ENCODE measurements at regions of chr21 and their contacts with region 1.

Region 1: DNA sequence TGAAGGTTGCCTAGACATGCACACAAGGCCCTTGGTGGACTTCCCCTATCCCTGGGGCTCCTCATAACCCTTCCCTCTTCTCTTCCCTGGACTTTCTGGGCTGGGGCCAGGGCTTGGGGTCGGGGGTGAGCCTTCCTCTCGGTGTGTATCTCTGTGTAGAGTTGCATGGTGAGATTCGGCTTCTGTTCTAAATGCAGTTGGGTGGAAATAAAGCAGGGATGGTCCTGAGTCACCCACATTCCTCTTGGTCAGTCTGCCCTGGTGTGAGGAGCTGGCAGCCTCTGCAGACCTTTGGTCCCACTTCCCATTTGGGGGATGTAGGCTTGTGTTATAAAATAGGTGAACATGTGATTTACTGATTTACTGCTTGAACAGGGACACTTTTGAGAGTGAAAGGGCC is 38.0 kb downstream of the ADARB1 start:
- DNase-seq: no peak
- H3K4me3 ChIP-seq: no peak overlapping the region
- H3K27ac ChIP-seq: peak overlapping the region; percentile 75 to 76
- H3K4me1 ChIP-seq: peaks cover 0 to 98% (median 56%) of the 10 kb centered on the region in 4 donors
- H3K27me3 ChIP-seq: no peaks in the 10 kb centered on the region
- CTCF ChIP-seq: no peak

Region 2: DNA sequence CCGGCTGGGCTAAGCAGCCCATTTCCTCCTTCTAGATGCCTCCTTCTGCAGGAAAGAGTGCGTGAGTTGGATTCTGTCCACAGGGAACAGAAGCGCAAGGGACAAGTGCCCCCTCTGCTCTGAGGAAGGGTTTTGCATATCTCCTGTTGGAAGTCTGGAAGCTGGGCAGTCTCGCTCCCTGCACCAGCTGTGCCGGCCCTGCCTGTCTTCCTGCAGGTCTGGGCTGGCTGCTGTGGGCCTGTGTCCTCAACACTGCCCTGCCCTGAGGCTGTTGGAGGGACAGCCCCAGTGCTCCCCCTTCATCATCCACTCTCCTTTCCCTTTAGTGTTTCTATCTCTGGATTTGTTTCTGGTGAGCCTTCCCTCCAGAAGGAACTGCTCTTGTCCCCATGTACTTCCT is 16.2 kb before region 1 on chr21:
- intact Hi-C with region 1: loop called (anchors 2 kb)
- DNase-seq: no peak
- H3K4me3 ChIP-seq: peak overlapping the region in 1 of 2 donors; percentile 4
- H3K27ac ChIP-seq: peak overlapping the region; percentile 63 to 66
- H3K4me1 ChIP-seq: peaks cover 0 to 100% (median 91%) of the 10 kb centered on the region in 4 donors
- H3K27me3 ChIP-seq: no peaks in the 10 kb centered on the region
- CTCF ChIP-seq: no peak

Measured in tibial artery (tissue), 4 donors.